CD8-positive, alpha-beta T cell (primary cell): ENCODE measurements at regions of chr3 and their contacts with region 1.

Region 1: DNA sequence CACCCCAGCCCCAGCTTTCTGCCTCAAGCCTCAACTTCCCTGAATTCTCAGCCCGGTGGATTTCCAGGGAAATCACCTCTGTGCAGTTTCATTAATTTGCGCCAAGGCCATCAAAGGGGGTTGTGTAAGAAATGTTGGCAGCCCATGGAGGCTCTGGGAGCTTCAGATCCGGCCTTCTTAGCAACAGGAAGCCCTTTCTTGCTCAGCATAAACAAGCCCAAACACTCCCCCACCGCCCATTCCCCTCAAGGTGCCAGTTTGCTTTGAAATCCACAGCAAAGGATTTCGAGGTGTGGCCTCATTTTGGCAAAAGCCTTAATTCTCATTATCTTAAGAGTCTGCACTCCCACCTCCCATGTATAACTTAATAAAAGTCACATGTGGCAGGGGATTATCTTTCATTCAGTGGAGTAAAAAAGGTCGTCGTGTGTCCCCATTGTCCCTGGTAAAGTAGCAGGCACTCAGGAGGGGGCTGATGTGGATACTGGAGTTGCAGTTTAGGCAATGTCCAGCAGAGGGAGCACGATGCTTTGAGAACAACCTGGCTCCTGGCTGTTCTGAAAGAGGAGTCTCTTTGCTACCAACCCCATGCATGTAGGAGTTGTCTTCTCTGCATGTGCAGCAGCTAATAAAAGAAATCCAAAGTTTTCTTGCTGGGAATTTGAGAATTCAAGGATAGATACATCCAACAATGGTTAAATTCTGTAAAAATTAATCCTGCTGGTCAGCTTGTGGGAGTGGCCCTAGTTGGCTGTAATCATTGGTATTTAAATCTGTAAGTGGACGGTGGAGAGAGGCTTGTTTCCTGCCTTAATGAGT is 39.5 kb downstream of the EBLN2 start:
- DNase-seq: peak; percentile 57 to 84 (median 75)
- ATAC-seq: peak; percentile 85
- H3K4me3 ChIP-seq: no peak overlapping the region
- H3K4me3 Mint-ChIP-seq: no peak overlapping the region
- H3K27ac ChIP-seq: no peak overlapping the region
- H3K27ac Mint-ChIP-seq: no peak overlapping the region
- H3K4me1 ChIP-seq: no peaks in the 10 kb centered on the region
- H3K4me1 Mint-ChIP-seq: no peaks in the 10 kb centered on the region
- H3K27me3 ChIP-seq: no peaks in the 10 kb centered on the region
- H3K27me3 Mint-ChIP-seq: peaks cover 5% of the 10 kb centered on the region
- CTCF ChIP-seq: peak; percentile 88

Region 2: GRCh38 chr3:73164622-73165021 is 63.7 kb after region 1 on chr3:
- CTCF ChIA-PET with region 1: no interaction called
- POLR2A ChIA-PET with region 1: no interaction called
- intact Hi-C with region 1: no loop called
- DNase-seq: no peak
- ATAC-seq: no peak
- H3K4me3 ChIP-seq: no peak overlapping the region
- H3K4me3 Mint-ChIP-seq: no peak overlapping the region
- H3K27ac ChIP-seq: no peak overlapping the region
- H3K27ac Mint-ChIP-seq: no peak overlapping the region
- H3K4me1 ChIP-seq: no peaks in the 10 kb centered on the region
- H3K4me1 Mint-ChIP-seq: no peaks in the 10 kb centered on the region
- H3K27me3 ChIP-seq: no peaks in the 10 kb centered on the region
- H3K27me3 Mint-ChIP-seq: peaks cover 8% of the 10 kb centered on the region
- CTCF ChIP-seq: no peak

Region 3: DNA sequence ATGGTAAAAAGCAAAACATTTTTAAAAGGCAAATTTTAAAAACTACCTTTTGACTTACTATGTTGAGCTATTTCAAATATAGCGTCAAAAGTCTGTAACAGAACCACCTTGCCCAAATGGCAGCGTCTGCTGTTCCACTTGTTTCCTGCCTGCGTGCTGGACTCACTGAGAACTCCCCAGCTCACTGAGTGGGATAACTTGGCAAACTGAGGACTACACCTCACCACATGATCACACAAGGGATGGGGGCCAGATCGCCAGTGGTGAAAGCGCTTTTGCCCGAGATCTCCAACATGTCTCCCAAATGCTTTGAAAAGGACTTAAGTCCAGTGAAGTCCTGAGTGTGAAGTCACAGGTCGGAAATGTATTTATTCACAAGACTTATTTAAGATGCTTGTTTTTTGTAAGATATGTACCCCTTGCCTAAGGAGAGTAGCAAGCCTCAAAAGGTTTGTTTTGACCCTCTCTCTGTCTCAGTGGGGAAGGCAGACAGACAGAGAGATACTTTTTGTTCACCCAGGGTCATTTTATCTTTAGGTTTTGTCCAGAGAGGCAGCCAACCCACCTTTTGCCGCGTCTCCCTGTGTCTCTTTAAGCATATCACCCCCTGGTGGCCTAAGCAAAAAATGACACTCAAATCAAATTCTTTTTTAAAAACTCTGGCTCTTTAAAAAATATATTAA is 331.2 kb after region 1 on chr3:
- CTCF ChIA-PET with region 1: no interaction called
- POLR2A ChIA-PET with region 1: no interaction called
- intact Hi-C with region 1: loop called in 1 of 2 experiments (anchors 5 kb)
- DNase-seq: peak in 2 of 9 experiments; percentile 4 to 22
- ATAC-seq: no peak
- H3K4me3 ChIP-seq: no peak overlapping the region
- H3K4me3 Mint-ChIP-seq: no peak overlapping the region
- H3K27ac ChIP-seq: no peak overlapping the region
- H3K27ac Mint-ChIP-seq: no peak overlapping the region
- H3K4me1 ChIP-seq: no peaks in the 10 kb centered on the region
- H3K4me1 Mint-ChIP-seq: no peaks in the 10 kb centered on the region
- H3K27me3 ChIP-seq: no peaks in the 10 kb centered on the region
- H3K27me3 Mint-ChIP-seq: peaks cover 9% of the 10 kb centered on the region
- CTCF ChIP-seq: no peak

Region 4: DNA sequence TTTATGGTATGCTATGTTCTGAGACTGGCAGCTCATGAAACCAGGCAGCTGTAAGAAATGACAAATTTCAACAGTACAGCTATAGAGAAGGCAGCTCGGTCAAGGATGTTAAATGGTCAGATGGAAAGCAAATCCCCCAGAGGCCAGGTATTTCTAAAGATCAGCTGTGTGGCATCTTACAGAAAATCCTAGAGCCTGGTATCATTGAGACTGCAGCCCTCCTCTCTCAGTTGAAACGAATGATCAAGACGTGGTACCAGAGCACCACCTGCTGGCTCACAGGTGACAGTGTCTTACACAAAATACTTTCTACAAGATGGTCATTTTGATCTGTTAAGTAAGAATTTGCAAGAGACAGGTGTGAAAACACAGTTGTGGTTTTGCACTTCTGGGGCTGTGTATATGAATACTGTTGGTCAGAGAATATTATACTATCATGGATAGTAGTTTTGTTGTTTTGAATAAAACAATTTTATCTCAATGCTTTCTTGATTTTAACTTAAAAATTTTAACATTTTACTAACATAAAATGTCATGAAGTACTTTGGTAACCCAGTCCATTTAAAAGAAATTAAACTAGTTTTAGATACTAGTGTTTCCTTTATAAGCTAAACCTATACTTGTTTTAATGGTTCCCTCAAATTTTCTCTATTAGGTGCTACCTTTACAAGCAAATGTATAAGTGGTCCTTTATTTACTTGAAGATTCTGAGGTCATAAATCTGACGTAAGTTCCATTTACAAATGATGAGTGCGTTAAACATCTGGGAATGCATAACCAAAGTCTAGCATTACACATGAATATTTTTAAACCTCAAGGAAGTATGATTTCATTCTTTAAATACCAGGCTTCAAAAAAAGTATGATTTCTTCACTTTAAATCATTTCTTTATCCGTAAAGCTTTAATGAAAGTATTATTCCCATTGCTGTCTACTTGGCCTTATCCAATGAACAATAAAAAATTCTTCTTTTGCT is 401.9 kb after region 1 on chr3:
- CTCF ChIA-PET with region 1: interaction called, 38 read pairs
- POLR2A ChIA-PET with region 1: no interaction called
- intact Hi-C with region 1: loop called in 1 of 2 experiments (anchors 1 kb)
- DNase-seq: peak in 8 of 9 experiments; percentile 15 to 63 (median 43)
- ATAC-seq: no peak
- H3K4me3 ChIP-seq: no peak overlapping the region
- H3K4me3 Mint-ChIP-seq: no peak overlapping the region
- H3K27ac ChIP-seq: no peak overlapping the region
- H3K27ac Mint-ChIP-seq: no peak overlapping the region
- H3K4me1 ChIP-seq: no peaks in the 10 kb centered on the region
- H3K4me1 Mint-ChIP-seq: no peaks in the 10 kb centered on the region
- H3K27me3 ChIP-seq: no peaks in the 10 kb centered on the region
- H3K27me3 Mint-ChIP-seq: peaks cover 21% of the 10 kb centered on the region
- CTCF ChIP-seq: peak; percentile 66